Posterior vena cava (tissue), 2 donors: ENCODE measurements at regions of chr1 and their contacts with region 1.

Region 1: DNA sequence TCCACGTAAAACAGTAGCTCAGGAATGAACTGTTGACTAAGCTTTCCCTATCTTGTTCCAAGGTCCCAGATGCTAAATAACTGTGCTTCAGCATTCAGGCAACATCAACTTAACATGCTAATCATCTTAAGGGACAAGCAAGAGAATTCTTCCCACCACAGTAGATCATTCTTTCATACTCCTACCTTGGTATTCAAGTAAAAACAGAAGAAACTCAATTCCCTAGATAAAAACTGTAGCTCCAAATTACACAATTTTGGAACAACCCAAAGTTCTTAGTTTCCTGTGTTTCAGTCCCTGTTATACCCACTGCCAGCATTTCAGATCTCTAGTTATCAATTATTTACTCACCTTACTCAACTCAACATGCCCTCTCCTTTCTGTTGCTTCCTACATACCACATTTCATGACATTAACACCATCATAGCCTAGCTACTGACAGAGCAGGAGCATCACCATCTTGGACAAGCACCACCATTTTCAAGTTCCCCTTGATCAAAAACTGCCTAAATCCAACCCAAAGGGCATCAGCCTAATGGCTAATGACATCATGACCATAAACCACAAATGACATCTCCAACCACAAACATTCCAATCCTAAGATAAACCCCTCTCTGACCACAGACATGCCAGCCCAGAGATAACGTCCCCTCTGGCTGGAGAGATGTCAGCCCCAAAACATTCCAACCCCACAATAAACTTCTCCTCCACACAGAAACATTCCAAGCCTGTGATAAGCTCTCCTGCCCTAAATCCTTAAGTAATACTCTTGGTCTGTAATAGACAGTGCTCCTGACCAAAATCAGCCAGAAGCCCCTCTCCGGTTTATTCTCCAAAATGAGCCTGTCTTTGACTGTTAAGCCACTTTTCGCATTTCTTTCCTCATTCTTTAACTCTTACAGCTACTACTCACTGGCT is 191.2 kb downstream of the RERE start:
- DNase-seq: no peak

Region 2: GRCh38 chr1:8681911-8682310 is 55.7 kb after region 1 on chr1:
- intact Hi-C with region 1: loop called in 1 of 2 experiments (anchors 2 kb)
- DNase-seq: no peak